ENCODE measurements at regions of chr18 and their contacts with region 1.

Region 1: DNA sequence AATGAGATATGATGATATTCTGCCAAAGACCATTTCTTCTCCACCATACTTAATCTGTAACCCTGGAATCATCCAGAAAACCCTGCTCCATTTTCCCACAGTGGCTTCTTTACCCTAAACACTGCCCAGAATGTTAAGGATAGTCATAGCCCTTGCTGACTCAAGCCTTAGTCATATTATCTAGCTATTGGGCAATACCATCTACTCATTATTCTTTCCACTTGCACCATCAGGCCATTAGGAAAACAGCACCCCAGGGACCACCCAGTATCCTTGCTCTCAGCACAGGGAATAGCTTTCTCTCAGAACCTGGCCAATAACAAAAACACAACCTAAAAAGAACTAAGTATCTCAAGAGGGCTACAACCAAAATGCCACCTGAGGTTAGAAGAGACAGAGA is 445.7 kb upstream of the SLC14A2 start:
- DNase-seq: peak in 1 of 6 donors; percentile 18
- ATAC-seq: peak; percentile 41 to 61 (median 55)
- H3K4me3 ChIP-seq: no peak overlapping the region
- H3K27ac ChIP-seq: no peak overlapping the region
- H3K4me1 ChIP-seq: no peaks in the 10 kb centered on the region
- H3K27me3 ChIP-seq: no peaks in the 10 kb centered on the region
- CTCF ChIP-seq: no peak

Region 2: DNA sequence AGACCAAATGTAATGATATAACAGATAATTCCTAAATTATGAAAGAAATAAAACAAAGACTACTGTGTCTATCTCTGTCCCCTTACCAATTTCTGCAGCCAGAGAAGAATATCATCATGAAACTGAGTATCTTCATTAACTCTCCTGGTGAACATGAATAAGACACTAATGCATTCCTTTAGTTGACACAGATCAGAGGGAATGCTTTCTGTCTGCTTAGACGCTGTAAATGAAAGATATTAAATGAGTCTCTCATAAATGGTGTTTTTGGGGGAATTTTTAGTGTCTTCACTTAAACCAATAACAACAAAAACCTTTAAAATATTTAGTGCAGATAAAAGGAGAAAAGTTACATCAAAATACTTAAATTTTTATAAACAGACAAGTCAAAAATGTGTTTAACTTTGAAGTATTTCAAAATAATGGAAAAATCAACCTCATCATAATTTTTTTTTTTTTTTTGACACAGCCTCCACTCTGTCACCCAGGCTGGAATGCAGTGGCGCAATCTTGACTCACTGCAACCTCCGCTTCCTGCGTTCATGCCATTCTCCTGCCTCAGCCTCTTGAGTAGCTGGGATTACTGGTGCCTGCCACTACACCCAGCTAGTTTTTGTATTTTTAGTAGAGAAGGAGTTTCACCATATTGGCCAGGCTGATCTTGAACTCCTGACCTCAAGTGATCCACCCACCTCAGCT is 781.6 kb after region 1 on chr18:
- intact Hi-C with region 1: loop called in 1 of 3 experiments (anchors 10 kb)
- DNase-seq: no peak
- ATAC-seq: no peak
- H3K4me3 ChIP-seq: no peak overlapping the region
- H3K27ac ChIP-seq: no peak overlapping the region
- H3K4me1 ChIP-seq: no peaks in the 10 kb centered on the region
- H3K27me3 ChIP-seq: no peaks in the 10 kb centered on the region
- CTCF ChIP-seq: no peak